Posterior cingulate gyrus (tissue), 11 donors: ENCODE measurements at regions of chr9 and their contacts with region 1.

Region 1: DNA sequence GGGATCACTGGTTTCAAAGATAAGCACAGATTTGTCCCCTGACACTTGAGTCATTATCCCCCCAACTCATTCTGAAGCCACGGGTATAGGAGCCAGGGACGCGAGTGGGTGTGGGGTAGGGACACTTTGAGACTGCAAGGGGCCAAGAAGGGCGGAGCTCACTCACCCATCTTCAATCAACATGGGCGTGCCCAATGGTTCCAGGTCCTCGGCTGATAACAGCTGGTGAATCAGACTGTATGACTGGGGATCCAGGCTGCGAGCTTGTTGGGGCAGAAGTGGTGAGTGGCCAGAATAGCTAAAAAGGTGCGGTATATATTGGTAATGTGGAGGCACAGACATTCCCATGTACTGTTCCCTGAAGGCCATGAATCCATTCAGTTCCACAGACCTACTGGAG is 30.7 kb upstream of the NR5A1 start:
- DNase-seq: no peak

Region 2: DNA sequence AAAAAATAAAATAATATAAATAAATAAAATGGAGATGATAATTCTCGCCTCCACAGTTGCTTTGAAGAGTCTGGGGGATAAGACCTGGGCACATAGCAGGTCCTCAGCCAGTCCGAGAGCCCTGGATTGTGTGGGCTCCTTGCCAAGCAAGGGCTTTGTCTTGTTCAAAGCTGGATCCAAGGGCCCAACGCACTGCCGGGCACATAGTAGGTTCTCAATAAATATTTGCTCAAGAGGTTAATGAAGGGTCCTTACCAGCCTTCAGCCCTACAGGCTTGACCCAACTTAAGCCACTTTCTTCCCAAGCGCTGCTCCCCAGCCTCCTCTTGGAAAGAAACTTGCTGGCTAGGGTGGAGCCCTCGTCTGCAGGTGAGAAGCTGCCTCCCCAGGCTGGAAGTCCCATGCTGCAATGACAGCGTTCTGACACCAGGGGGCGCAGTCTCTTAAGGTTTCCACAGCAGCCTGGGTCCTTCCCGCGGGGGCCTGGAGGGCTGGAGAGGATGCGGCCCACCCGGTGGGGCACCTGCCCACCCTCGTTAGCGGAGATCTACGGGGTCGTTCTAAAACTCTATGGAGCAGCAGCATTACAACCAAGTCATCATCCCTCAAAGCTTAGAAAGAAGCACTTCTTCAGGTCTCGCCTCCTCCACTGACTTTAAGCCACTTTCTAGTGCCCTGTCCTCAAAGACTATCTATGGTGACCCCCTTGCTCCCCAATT is 411.2 kb before region 1 on chr9:
- intact Hi-C with region 1: loop called (anchors 5 kb)
- DNase-seq: peak; percentile 36 to 95 (median 76)

Region 3: GRCh38 chr9:124392871-124393460 is 145.0 kb before region 1 on chr9:
- intact Hi-C with region 1: loop called (anchors 2 kb)
- DNase-seq: peak; percentile 37 to 95 (median 69)

Region 4: DNA sequence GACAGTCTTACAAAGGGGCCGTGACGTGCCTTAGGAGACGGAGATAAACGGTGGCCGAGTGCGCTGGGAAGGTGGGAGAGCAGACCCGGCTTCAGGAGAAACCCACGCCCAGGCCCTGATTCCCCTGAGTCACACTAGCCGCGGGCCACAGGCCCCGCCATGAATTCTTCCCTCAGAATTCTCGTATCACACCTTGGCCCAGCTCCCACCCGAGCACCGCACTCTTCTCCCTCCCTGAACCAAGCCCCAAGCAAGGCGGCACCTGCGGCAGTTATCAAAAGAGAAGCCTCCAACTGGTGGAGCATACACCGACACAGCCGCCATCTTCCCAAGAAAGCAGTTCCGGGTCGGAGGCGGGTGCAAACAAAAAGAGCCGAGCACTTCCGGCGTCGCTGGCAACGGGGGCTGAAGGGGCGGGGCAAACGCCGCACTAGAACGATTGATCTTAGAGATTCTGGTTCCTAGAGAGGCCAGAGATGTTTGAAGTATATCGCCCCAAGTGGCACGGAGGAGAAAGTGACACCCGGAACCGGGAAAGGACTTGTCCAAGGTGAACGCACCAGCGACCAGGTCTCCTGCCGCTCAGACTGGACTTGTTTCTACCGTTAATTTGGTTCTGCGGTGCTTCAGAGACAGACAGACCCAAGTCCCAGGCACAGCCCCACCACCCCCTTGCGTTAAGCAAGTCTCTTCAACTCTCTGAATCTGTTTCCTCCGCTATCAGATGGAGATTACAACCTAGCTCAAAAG is 122.6 kb before region 1 on chr9 and contains the start of gene PSMB7:
- intact Hi-C with region 1: loop called (anchors 1 kb)
- DNase-seq: peak; percentile 91 to 99 (median 96)